Endothelial cell of umbilical vein (primary cell): ENCODE measurements at regions of chr17 and their contacts with region 1.

Region 1: DNA sequence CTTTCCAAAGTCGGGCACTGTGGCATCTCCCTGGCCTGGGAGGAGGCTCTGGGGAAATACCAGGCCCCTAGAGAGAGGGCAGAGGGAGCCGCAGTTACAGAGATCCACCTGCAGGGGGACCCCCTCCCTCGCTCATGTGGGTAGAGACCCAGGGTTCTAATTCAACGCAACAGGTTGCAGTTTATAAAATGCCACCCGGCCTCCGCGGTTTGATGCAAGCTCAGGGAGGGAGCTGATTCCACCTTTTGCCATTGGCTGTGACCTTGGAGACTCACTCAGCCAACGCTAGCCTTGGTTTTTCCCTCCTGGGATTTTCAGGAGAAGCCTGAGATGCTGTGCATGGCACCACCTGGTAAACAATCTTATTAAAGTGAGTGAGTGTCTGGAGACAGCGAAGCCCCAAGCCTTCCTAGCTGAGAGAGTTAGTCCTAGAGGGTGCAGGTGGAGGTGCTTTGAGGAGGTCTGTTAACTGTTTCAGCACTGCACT is 12.1 kb downstream of the TTLL6 start:
- DNase-seq: peak; percentile 47
- H3K4me3 ChIP-seq: no peak overlapping the region
- H3K27ac ChIP-seq: no peak overlapping the region
- H3K4me1 ChIP-seq: no peaks in the 10 kb centered on the region
- H3K27me3 ChIP-seq: peaks cover 2 to 5% of the 10 kb centered on the region in 2 experiments
- CTCF ChIP-seq: peak; percentile 87 to 94
- POLR2A ChIP-seq: no peak

Region 2: GRCh38 chr17:48860034-48860433 is 55.1 kb after region 1 on chr17:
- CTCF ChIA-PET with region 1: interaction called, 15 read pairs
- POLR2A ChIA-PET with region 1: no interaction called
- dilution Hi-C with region 1: no loop called
- intact Hi-C with region 1: no loop called
- DNase-seq: no peak
- H3K4me3 ChIP-seq: no peak overlapping the region
- H3K27ac ChIP-seq: no peak overlapping the region
- H3K4me1 ChIP-seq: no peaks in the 10 kb centered on the region
- H3K27me3 ChIP-seq: no peaks in the 10 kb centered on the region
- CTCF ChIP-seq: no peak
- POLR2A ChIP-seq: no peak